ENCODE measurements at regions of chr3 and their contacts with region 1.

Region 1: DNA sequence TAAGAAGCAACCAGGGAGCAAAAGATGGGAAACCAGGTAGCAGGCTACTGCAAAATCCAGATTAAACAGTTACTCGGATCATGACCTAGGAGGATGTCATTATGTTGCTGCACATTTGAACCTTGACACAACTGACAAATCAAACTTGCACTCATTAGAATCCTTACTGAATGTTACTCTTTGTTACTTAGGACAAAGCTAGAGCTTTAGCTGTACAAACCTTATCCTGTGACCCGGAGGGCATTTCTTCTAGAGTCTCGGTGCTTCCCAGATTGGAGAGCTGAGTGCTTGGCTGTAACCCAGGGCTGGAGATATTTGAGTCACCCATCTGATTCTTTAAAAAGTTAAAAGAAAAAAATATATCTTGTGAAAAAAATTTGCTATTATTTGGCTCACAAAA is 43.4 kb downstream of the DCP1A start:
- DNase-seq: no peak
- H3K4me3 ChIP-seq: no peak overlapping the region
- H3K27ac ChIP-seq: no peak overlapping the region
- H3K4me1 ChIP-seq: no peaks in the 10 kb centered on the region
- H3K27me3 ChIP-seq: no peaks in the 10 kb centered on the region
- CTCF ChIP-seq: no peak
- POLR2A ChIP-seq: no peak

Region 2: GRCh38 chr3:53236112-53236841 is 67.7 kb before region 1 on chr3:
- CTCF ChIA-PET with region 1: no interaction called
- POLR2A ChIA-PET with region 1: interaction called, 11 read pairs
- dilution Hi-C with region 1: no loop called
- intact Hi-C with region 1: no loop called
- DNase-seq: peak; percentile 90
- H3K4me3 ChIP-seq: no peak overlapping the region
- H3K27ac ChIP-seq: peak overlapping the region; percentile 88
- H3K4me1 ChIP-seq: peaks cover 39% of the 10 kb centered on the region
- H3K27me3 ChIP-seq: no peaks in the 10 kb centered on the region
- CTCF ChIP-seq: no peak
- POLR2A ChIP-seq: peak; percentile 46

Region 3: DNA sequence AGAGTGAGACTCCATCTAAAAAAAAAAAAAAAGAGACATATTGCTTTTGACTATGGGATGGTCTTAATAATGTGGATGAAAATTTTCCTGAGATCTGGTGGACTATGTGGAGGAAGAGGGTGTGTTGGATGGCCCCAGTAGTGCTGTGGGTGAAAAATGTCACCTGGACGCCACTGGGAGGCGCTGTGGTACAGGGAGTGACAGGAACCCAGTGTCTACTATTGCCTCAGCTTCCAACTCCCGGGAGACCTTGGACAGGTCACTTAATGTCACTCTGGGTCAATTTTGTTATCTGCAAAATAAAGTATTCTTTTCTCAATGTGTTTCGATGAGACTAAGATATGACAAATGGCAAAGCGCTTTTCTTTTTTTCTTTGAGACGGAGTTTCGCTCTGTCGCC is 71.1 kb after region 1 on chr3:
- CTCF ChIA-PET with region 1: no interaction called
- POLR2A ChIA-PET with region 1: no interaction called
- dilution Hi-C with region 1: no loop called
- intact Hi-C with region 1: loop called (anchors 1 kb)
- DNase-seq: peak; percentile 55
- H3K4me3 ChIP-seq: no peak overlapping the region
- H3K27ac ChIP-seq: no peak overlapping the region
- H3K4me1 ChIP-seq: no peaks in the 10 kb centered on the region
- H3K27me3 ChIP-seq: peaks cover 0 to 7% of the 10 kb centered on the region in 2 experiments
- CTCF ChIP-seq: peak; percentile 74 to 77
- POLR2A ChIP-seq: no peak

Region 4: DNA sequence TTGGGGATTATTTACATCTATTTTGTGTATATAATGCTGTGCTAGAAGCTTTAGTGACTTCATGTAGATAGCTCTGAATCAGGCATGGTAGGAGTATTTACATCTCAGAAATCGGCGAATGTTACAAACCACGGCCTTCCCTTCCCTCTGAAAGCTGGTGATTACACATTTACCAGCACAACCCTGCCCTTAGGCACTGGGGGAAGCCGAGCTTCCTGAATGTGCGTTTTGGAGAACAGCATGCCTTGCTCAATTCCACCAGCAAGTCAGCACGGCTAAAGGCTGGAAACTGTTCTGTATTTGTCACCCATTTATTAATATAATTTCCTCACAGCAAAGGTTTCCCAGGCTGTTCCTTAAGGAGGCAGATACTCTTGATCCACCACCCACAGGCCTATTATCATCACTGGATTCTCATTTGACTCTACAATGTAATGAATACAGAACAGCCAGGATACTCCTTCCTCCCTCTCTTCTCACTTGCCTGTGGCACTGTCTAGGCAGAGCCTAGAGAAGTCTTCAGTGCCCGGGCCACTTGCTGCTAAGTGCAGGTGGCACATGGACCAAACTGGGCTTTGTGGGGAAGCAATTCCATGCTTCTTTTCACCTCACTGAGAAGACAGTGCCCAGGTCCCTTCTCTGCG is 763.2 kb after region 1 on chr3:
- CTCF ChIA-PET with region 1: no interaction called
- POLR2A ChIA-PET with region 1: no interaction called
- dilution Hi-C with region 1: no loop called
- intact Hi-C with region 1: no loop called
- DNase-seq: no peak
- H3K4me3 ChIP-seq: no peak overlapping the region
- H3K27ac ChIP-seq: no peak overlapping the region
- H3K4me1 ChIP-seq: no peaks in the 10 kb centered on the region
- H3K27me3 ChIP-seq: no peaks in the 10 kb centered on the region
- CTCF ChIP-seq: no peak
- POLR2A ChIP-seq: no peak

Measured in endothelial cell of umbilical vein (primary cell).